T-cell (primary cell): ENCODE measurements at regions of chr22 and their contacts with region 1.

Region 1: GRCh38 chr22:41403532-41404318 is 22.0 kb downstream of the TEF start:
- DNase-seq: peak; percentile 55 to 91 (median 74)
- ATAC-seq: peak; percentile 96 to 99 (median 98)
- H3K4me3 ChIP-seq: no peak overlapping the region
- H3K4me3 Mint-ChIP-seq: no peak overlapping the region
- H3K27ac ChIP-seq: no peak overlapping the region
- H3K27ac Mint-ChIP-seq: no peak overlapping the region
- H3K4me1 ChIP-seq: peaks cover 2 to 16% of the 10 kb centered on the region in 2 experiments
- H3K4me1 Mint-ChIP-seq: peaks cover 8 to 9% (median 9%) of the 10 kb centered on the region in 3 donors
- H3K27me3 ChIP-seq: no peaks in the 10 kb centered on the region
- H3K27me3 Mint-ChIP-seq: no peaks in the 10 kb centered on the region

Region 2: DNA sequence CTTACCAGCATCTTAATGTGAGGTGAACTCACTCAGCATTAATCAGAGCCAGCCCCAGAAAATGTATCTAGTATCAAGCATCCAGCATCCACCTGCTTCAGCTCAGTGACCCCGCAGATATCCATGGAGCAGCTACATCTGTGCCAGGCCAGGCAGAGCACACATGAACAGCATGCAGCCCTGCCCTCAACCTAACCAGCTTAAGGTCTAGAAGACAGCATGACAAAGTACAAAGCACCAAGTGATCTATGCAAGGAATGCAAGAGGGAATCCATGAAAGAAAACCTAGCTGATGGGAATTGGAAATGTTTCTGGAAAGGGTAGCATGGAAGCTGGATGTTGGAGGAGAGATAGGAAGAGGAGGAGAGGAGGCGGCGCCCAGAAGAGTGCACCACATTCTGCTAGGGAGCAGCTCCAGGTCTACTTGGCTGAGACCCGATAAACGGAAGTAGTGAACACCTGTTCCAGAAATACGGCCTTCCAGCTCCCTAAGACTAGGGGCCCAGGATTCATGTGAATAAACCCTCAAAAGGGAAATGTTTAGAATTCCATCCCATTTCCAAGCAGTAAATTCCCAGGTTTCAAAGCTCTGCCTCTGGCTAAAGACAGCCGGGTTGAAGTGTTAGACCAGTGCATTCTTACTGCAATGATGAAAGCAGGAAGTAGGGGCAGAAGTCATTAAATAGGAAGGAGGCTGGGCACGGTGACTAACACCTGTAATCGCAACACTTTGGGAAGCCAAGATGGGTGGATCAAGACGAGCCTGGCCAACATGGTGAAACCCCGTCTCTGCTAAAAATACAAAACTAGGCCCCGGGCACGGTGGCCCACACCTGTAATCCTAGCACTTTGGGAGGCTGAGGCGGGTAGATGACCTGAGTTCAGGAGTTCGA is 222.1 kb before region 1 on chr22:
- CTCF ChIA-PET with region 1: no interaction called
- POLR2A ChIA-PET with region 1: no interaction called
- DNase-seq: no peak
- ATAC-seq: no peak
- H3K4me3 ChIP-seq: no peak overlapping the region
- H3K4me3 Mint-ChIP-seq: no peak overlapping the region
- H3K27ac ChIP-seq: no peak overlapping the region
- H3K27ac Mint-ChIP-seq: peak overlapping the region in 1 of 2 donors; percentile 65
- H3K4me1 ChIP-seq: no peaks in the 10 kb centered on the region
- H3K4me1 Mint-ChIP-seq: peaks cover 2 to 5% (median 3%) of the 10 kb centered on the region in 3 donors
- H3K27me3 ChIP-seq: no peaks in the 10 kb centered on the region
- H3K27me3 Mint-ChIP-seq: no peaks in the 10 kb centered on the region

Region 3: GRCh38 chr22:41526837-41527799 is 123.4 kb after region 1 on chr22:
- CTCF ChIA-PET with region 1: interaction called, 12 to 42 read pairs
- POLR2A ChIA-PET with region 1: no interaction called
- DNase-seq: peak; percentile 25 to 80 (median 59)
- ATAC-seq: peak; percentile 51 to 64 (median 56)
- H3K4me3 ChIP-seq: no peak overlapping the region
- H3K4me3 Mint-ChIP-seq: no peak overlapping the region
- H3K27ac ChIP-seq: peak overlapping the region; percentile 16
- H3K27ac Mint-ChIP-seq: peak overlapping the region; percentile 52 to 80
- H3K4me1 ChIP-seq: peaks cover 8 to 30% of the 10 kb centered on the region in 2 experiments
- H3K4me1 Mint-ChIP-seq: peaks cover 16 to 22% (median 16%) of the 10 kb centered on the region in 3 donors
- H3K27me3 ChIP-seq: no peaks in the 10 kb centered on the region
- H3K27me3 Mint-ChIP-seq: no peaks in the 10 kb centered on the region